ENCODE measurements at regions of chr1 and their contacts with region 1.

Region 1: GRCh38 chr1:77524038-77524437 is 158.4 kb downstream of the ZZZ3 start:
- DNase-seq: no peak
- CTCF ChIP-seq: no peak

Region 2: DNA sequence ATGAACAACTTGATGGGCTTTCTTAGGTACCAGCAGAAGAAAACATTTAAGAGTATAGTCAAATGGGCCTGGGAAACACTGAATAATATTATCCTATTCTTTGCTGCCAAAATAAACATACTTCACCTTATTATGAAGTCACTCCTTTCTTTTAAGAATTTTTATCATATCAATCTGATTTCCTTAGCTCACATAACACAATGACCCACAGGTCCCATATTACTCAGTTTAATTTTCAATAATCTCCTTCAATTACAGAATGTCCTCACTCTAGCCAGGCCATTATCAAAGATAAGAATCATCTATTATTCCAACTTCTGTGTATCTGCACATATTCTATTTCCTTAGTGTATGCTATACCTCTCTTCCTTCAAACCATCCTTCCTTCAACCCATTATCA is 367.8 kb before region 1 on chr1:
- in situ Hi-C with region 1: loop called (anchors 10 kb)
- DNase-seq: no peak
- CTCF ChIP-seq: no peak

Measured in GM13977 (cell line).